ENCODE measurements at regions of chr17 and their contacts with region 1.

Region 1: DNA sequence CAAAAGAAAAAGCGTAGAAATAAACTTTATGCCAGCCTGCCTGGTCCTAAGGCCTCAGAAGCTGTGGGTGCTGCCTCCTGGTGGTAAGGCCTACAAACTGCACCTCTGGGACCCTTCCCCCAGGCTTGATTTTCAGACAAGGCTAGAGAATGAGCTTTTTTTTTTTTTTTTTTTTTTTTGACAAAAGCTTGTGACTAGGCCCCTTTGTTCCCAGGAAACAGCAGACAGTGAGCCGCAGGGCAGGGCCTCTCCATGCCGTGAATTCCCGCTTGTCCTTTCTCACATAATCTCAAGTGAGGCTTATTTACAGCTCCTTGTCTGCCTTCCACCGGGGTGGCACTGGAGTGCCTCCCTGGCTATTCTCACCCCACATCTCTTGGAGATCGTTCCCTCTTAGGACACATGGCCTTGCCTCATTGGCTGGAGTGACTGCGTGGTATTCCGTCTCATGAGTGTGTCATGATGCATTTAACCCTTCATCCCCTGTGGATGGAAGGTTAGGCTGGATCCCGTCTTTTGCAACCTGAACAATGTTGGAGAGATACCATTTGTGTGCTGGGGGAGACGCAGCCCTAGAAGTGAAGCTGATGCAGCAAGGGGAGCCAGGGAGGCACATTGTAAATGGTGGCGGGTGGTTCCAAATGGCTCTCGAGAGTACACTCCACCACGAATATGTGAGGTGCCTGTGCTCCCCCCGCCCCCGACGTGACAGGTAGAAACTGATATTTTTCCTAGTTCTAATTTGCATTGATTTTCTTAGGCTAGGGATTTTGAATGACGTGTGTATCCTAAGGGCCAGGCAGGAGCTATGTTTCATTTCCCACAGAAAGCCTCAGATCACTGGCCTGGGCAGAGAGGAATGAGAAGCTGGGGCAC is 49.6 kb downstream of the USP22 start:
- DNase-seq: peak; percentile 71
- ATAC-seq: peak; percentile 82
- H3K4me3 ChIP-seq: no peak overlapping the region
- H3K27ac ChIP-seq: no peak overlapping the region
- H3K4me1 ChIP-seq: peaks cover 2% of the 10 kb centered on the region; the same call in 1 of the 2 replicates
- H3K27me3 ChIP-seq: peaks cover 3% of the 10 kb centered on the region; the same call in 1 of the 2 replicates
- CTCF ChIP-seq: peak; percentile 93
- POLR2A ChIP-seq: 0 out of 2 replicates have a peak, but pooled peaks have one; percentile 19
- RAD21 ChIP-seq: peak; percentile 87

Region 2: DNA sequence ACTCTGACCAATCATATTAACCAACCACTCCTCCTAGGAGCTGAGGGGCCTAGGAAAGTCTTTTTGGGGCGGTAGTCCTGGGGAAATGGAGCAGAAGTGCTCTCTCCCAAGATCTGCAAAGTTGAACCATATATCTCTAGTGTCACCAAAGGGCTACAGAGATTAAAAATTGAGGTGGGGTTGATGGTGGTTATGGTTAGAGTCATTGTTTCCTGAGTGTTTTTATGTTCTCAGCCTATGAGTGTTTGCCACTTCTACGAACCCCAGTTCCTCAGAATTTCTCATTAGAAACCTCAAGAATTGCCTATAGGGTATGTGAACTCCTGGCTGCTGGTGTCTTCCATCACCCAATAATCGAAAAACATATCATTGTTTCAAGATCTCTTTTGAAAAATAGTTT is 195.9 kb before region 1 on chr17:
- CTCF ChIA-PET with region 1: interaction called, 3 read pairs
- POLR2A ChIA-PET with region 1: interaction called, 3 read pairs
- dilution Hi-C with region 1: no loop called
- in situ Hi-C with region 1: loop called (anchors 10 kb)
- intact Hi-C with region 1: loop called (anchors 2 kb)
- DNase-seq: no peak
- ATAC-seq: no peak
- H3K4me3 ChIP-seq: no peak overlapping the region
- H3K27ac ChIP-seq: no peak overlapping the region
- H3K4me1 ChIP-seq: no peaks in the 10 kb centered on the region
- H3K27me3 ChIP-seq: no peaks in the 10 kb centered on the region
- CTCF ChIP-seq: no peak
- POLR2A ChIP-seq: no peak
- RAD21 ChIP-seq: no peak

Region 3: DNA sequence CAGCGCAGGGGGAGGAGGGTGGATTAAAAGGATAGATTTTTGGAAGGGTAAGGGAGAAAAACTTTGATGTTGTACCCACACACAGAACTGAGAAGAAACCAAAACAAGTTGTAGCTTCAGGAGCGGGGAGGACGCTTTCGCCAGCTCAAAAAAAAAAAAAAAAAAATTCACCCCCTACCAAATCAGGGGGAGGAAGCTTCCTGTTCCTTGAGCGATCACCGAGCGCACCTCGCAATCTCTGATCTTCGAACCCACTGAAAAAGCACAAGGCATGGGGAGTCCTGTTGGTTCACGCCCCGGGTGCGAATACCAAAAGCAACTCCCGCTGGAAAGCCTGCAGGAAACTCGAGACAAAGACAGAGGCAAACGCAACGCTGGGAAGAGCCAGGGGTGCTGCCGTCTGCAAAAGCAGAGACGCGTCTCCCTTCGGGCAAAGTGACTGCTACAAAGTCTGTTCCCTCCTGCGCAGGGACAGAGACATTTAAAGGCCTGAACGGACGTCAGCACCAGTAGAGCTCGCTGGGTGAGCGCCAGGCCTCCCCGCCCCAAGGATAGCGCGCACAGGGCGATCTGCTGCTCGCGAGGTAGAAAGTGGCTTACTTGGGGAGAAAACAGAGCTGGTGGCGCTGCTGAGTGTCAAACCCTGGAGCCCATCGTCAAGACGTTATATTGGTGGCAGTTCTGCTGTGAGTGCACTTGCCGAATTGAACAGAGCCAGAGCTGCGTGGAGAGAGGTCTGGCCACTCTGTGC is 140.8 kb before region 1 on chr17:
- CTCF ChIA-PET with region 1: no interaction called
- POLR2A ChIA-PET with region 1: no interaction called
- dilution Hi-C with region 1: no loop called
- in situ Hi-C with region 1: no loop called
- intact Hi-C with region 1: loop called (anchors 5 kb)
- DNase-seq: no peak
- ATAC-seq: peak; percentile 57
- H3K4me3 ChIP-seq: peak overlapping the region; percentile 29; the same call in 1 of the 2 replicates
- H3K27ac ChIP-seq: no peak overlapping the region
- H3K4me1 ChIP-seq: no peaks in the 10 kb centered on the region; the same call in 1 of the 2 replicates
- H3K27me3 ChIP-seq: peaks cover 21% of the 10 kb centered on the region
- CTCF ChIP-seq: no peak
- POLR2A ChIP-seq: no peak
- RAD21 ChIP-seq: no peak

Region 4: DNA sequence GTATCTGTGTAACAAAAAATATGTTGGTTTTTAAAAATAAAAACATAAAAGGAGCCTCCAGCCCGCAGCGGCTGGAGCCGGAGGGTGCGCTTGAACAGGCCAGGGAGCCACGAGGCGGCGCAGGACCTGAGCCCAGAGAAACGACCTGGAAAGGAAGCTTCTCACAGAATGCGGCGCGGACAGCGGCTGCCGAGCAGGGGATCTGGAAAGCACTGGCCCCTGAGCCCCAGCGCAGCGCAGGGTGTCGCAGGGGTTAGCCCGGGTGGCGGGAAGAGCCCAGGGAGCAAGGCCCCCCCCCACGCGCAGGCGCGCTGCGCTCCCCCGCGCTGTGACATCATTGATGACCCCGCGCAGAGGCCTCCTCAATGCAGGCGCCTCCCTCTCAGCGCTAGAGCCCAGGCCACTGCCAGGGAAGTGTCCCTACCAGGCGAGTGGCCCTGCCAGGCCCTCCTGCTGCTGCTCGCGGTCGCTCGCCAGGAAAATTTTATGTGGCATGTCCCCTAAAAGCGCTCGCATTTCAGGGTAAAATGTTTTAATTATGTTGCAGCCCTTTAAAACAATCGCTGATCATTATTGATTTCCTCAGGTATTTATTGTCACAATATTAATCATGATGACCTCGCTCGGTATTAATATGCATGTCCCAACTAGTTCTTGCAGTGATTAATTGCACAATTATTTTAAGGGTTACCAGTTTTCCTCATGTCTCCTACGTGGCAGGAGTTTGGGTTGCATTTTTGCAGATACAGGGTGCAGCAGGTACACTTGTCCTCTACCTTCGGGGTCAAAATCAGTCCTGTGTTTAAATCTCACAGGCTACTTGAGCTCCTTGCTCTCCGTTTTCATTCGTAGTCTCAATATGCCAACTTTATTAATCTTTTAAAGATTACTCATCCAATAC is 84.6 kb before region 1 on chr17:
- CTCF ChIA-PET with region 1: no interaction called
- POLR2A ChIA-PET with region 1: no interaction called
- dilution Hi-C with region 1: no loop called
- in situ Hi-C with region 1: loop called (anchors 5 kb)
- intact Hi-C with region 1: loop called (anchors 1 kb)
- DNase-seq: peak; percentile 53
- ATAC-seq: peak; percentile 100
- H3K4me3 ChIP-seq: peak overlapping the region; percentile 63
- H3K27ac ChIP-seq: peak overlapping the region; percentile 78
- H3K4me1 ChIP-seq: no peaks in the 10 kb centered on the region
- H3K27me3 ChIP-seq: no peaks in the 10 kb centered on the region
- CTCF ChIP-seq: peak; percentile 59
- POLR2A ChIP-seq: no peak
- RAD21 ChIP-seq: peak; percentile 46

Region 5: DNA sequence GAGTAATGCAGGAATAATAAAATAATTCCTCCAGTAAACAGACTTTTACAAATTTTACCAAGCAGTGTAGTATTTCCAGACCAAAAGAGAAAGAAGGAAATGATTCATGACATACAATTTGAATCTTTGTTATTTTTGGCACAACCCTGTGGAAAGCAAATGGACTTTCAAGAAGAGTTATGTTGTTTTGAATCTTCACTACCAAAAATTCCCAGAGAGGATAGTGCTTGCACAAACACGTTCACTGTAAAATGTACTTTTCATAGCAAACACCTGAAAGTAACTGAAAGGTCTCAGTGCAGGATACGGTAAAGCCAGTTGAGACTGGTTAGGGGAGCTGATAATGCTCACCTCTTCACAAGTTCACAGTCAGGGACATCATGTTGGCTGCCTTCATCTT is 57.5 kb before region 1 on chr17:
- CTCF ChIA-PET with region 1: no interaction called
- POLR2A ChIA-PET with region 1: no interaction called
- dilution Hi-C with region 1: no loop called
- in situ Hi-C with region 1: no loop called
- intact Hi-C with region 1: loop called (anchors 2 kb)
- DNase-seq: peak; percentile 75
- ATAC-seq: peak; percentile 52
- H3K4me3 ChIP-seq: no peak overlapping the region
- H3K27ac ChIP-seq: no peak overlapping the region
- H3K4me1 ChIP-seq: peaks cover 3% of the 10 kb centered on the region
- H3K27me3 ChIP-seq: no peaks in the 10 kb centered on the region; the same call in 1 of the 2 replicates
- CTCF ChIP-seq: no peak
- POLR2A ChIP-seq: no peak
- RAD21 ChIP-seq: no peak

Region 6: GRCh38 chr17:21149621-21150020 is 156.4 kb after region 1 on chr17:
- CTCF ChIA-PET with region 1: no interaction called
- POLR2A ChIA-PET with region 1: no interaction called
- dilution Hi-C with region 1: no loop called
- in situ Hi-C with region 1: no loop called
- intact Hi-C with region 1: no loop called
- DNase-seq: no peak
- ATAC-seq: no peak
- H3K4me3 ChIP-seq: no peak overlapping the region
- H3K27ac ChIP-seq: no peak overlapping the region
- H3K4me1 ChIP-seq: no peaks in the 10 kb centered on the region
- H3K27me3 ChIP-seq: no peaks in the 10 kb centered on the region
- CTCF ChIP-seq: no peak
- POLR2A ChIP-seq: no peak
- RAD21 ChIP-seq: no peak

Measured in IMR-90 (cell line).